Endothelial cell of umbilical vein (primary cell): ENCODE measurements at regions of chr3 and their contacts with region 1.

Region 1: GRCh38 chr3:23945903-23946751 is 1.0 kb downstream of the NR1D2 start:
- DNase-seq: peak; percentile 98
- H3K4me3 ChIP-seq: peak overlapping the region; percentile 29 to 92 (median 63)
- H3K27ac ChIP-seq: peak overlapping the region; percentile 90
- H3K4me1 ChIP-seq: peaks cover 17% of the 10 kb centered on the region
- H3K27me3 ChIP-seq: peaks cover 3 to 10% of the 10 kb centered on the region in 2 experiments
- CTCF ChIP-seq: no peak
- POLR2A ChIP-seq: no peak

Region 2: GRCh38 chr3:23740517-23740965 is 205.6 kb before region 1 on chr3:
- CTCF ChIA-PET with region 1: no interaction called
- POLR2A ChIA-PET with region 1: no interaction called
- dilution Hi-C with region 1: no loop called
- intact Hi-C with region 1: loop called (anchors 2 kb)
- DNase-seq: peak; percentile 93
- H3K4me3 ChIP-seq: peak overlapping the region in 1 of 3 experiments; percentile 23
- H3K27ac ChIP-seq: peak overlapping the region; percentile 66
- H3K4me1 ChIP-seq: peaks cover 38% of the 10 kb centered on the region
- H3K27me3 ChIP-seq: no peaks in the 10 kb centered on the region
- CTCF ChIP-seq: no peak
- POLR2A ChIP-seq: peak; percentile 21

Region 3: DNA sequence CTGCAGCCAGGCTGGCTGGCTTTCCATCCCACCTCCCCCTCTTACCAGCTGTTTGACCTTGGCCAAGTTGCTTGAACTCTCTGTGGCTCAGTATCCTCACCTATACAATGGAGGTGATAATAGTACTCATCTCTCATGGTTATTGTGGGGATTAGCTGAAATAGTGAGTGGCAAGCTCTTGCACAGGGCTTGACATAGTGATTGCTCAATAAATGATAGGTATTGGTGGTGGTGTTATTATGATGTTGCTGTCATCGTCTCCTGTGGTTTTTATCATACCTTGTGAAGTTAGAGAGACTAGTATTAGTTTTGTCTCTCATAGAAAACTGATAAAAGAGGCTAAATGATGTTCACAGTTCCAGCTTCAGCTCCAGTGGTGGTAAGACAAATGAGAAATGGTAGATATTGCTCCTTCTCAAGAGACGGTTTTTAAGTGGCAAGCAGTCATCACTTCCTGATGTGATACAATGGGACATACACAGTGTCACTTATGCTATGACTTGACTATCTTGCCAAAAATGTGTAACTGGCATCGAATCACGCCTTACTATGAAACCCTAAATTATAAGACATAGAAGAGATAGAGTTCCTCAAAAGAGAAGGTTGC is 152.5 kb before region 1 on chr3:
- CTCF ChIA-PET with region 1: no interaction called
- POLR2A ChIA-PET with region 1: no interaction called
- dilution Hi-C with region 1: no loop called
- intact Hi-C with region 1: no loop called
- DNase-seq: no peak
- H3K4me3 ChIP-seq: no peak overlapping the region
- H3K27ac ChIP-seq: no peak overlapping the region
- H3K4me1 ChIP-seq: no peaks in the 10 kb centered on the region
- H3K27me3 ChIP-seq: peaks cover 0 to 3% of the 10 kb centered on the region in 2 experiments
- CTCF ChIP-seq: no peak
- POLR2A ChIP-seq: no peak

Region 4: GRCh38 chr3:23916886-23917678 is 29.0 kb before region 1 on chr3 and contains the starts of genes NKIRAS1 and RPL15:
- CTCF ChIA-PET with region 1: interaction called, 4 read pairs
- POLR2A ChIA-PET with region 1: interaction called, 21 read pairs
- dilution Hi-C with region 1: no loop called
- intact Hi-C with region 1: loop called (anchors 1 kb)
- DNase-seq: peak; percentile 97
- H3K4me3 ChIP-seq: peak within 1 kb of the TSS; percentile 93 to 100 (median 98)
- H3K27ac ChIP-seq: peak within 1 kb of the TSS; percentile 79
- H3K4me1 ChIP-seq: peaks cover 17% of the 10 kb centered on the region
- H3K27me3 ChIP-seq: no peaks in the 10 kb centered on the region
- CTCF ChIP-seq: peak in 1 of 2 donors; percentile 43
- POLR2A ChIP-seq: peak; percentile 99
- total RNA-seq, gene NKIRAS1: 2.8 and 2.9 TPM in 2 replicates
- total RNA-seq, gene RPL15: 1,872 and 1,901 TPM in 2 replicates

Region 5: GRCh38 chr3:23991683-23992628 is 45.8 kb after region 1 on chr3:
- CTCF ChIA-PET with region 1: interaction called, 3 read pairs
- POLR2A ChIA-PET with region 1: interaction called, 6 read pairs
- dilution Hi-C with region 1: no loop called
- intact Hi-C with region 1: loop called (anchors 1 kb)
- DNase-seq: peak; percentile 98
- H3K4me3 ChIP-seq: no peak overlapping the region
- H3K27ac ChIP-seq: peak overlapping the region; percentile 65
- H3K4me1 ChIP-seq: peaks cover 21% of the 10 kb centered on the region
- H3K27me3 ChIP-seq: no peaks in the 10 kb centered on the region
- CTCF ChIP-seq: no peak
- POLR2A ChIP-seq: no peak

Region 6: DNA sequence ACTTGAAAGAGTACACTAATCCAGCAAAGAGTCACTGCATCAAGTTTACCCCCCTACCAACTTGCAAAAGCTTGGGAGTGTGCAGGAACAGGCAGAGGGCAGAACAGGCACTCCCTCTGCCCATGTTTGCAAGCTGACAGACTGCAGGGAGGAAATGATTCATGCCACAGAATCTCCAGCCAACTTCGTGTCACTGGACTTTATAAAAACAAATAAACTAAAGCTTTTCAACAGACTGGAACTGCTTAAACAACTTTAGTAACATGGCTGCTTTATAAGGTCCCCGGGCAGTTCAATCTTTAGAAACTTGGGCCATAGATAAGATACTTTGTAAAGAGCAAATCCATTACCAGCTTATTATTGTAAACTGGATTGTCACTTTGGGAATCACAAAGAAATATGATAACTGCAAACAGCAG is 419.1 kb after region 1 on chr3:
- CTCF ChIA-PET with region 1: no interaction called
- POLR2A ChIA-PET with region 1: no interaction called
- dilution Hi-C with region 1: no loop called
- intact Hi-C with region 1: loop called (anchors 1 kb)
- DNase-seq: peak; percentile 97
- H3K4me3 ChIP-seq: no peak overlapping the region
- H3K27ac ChIP-seq: peak overlapping the region; percentile 29
- H3K4me1 ChIP-seq: peaks cover 12% of the 10 kb centered on the region
- H3K27me3 ChIP-seq: no peaks in the 10 kb centered on the region
- CTCF ChIP-seq: peak in 1 of 2 donors; percentile 2
- POLR2A ChIP-seq: peak; percentile 26